Esophagus muscularis mucosa (tissue), 4 donors: ENCODE measurements at regions of chr19 and their contacts with region 1.

Region 1: GRCh38 chr19:4811328-4812131 is 20.0 kb downstream of the TICAM1 start:
- DNase-seq: no peak
- H3K4me3 ChIP-seq: no peak overlapping the region
- H3K27ac ChIP-seq: peak overlapping the region in 2 of 4 donors; percentile 82
- H3K4me1 ChIP-seq: peaks cover 21 to 45% (median 30%) of the 10 kb centered on the region in 4 donors
- H3K27me3 ChIP-seq: no peaks in the 10 kb centered on the region
- CTCF ChIP-seq: peak; percentile 83 to 95 (median 86)
- EP300 ChIP-seq: no peak
- POLR2A ChIP-seq: no peak

Region 2: GRCh38 chr19:4851551-4852290 is 40.2 kb after region 1 on chr19:
- intact Hi-C with region 1: loop called (anchors 2 kb)
- DNase-seq: no peak
- H3K4me3 ChIP-seq: no peak overlapping the region
- H3K27ac ChIP-seq: no peak overlapping the region
- H3K4me1 ChIP-seq: peaks cover 0 to 1% (median 0%) of the 10 kb centered on the region in 4 donors
- H3K27me3 ChIP-seq: no peaks in the 10 kb centered on the region
- CTCF ChIP-seq: peak; percentile 85 to 92 (median 91)
- EP300 ChIP-seq: no peak
- POLR2A ChIP-seq: no peak

Region 3: DNA sequence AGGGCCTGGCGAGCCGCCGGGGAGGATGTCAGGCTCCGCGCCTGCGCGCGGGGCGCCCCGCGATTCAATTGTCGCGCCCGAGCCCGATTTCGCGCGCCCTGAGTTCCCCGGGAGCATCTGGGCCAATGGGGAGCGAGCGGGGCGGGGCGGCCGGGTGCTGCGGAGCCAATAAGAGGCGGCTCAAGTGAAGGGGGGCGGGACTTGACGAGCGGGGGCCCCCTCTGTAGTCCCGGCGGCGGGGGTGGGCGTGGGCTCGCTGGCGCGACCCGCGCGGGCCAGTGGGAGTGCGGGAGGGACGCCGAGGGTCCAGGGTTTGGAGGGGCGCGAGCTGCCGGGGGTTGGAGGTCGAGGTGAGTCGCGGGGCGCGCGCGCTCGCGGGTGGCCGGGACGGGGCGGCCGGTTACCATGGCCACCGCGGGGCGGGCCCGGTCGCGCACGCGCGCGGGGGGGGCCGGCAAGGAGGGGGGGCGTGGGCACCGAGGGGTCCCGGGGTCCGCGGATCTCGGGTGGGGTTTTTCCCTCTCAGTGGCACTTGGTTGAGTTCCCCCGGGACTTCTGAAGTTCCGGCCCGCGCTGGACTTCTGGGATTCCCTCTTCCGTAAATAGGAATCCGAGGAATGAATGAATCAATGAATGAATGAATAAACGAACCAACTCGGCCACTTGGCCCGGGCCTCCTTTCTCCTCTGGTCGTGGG is 98.5 kb after region 1 on chr19:
- intact Hi-C with region 1: loop called (anchors 5 kb)
- DNase-seq: peak; percentile 98
- H3K4me3 ChIP-seq: peak overlapping the region; percentile 62 to 93 (median 72)
- H3K27ac ChIP-seq: no peak overlapping the region
- H3K4me1 ChIP-seq: peaks cover 17 to 34% (median 32%) of the 10 kb centered on the region in 4 donors
- H3K27me3 ChIP-seq: peaks cover 0 to 24% (median 8%) of the 10 kb centered on the region in 4 donors
- CTCF ChIP-seq: no peak
- EP300 ChIP-seq: no peak
- POLR2A ChIP-seq: no peak